Thyroid gland (tissue), 4 donors: ENCODE measurements at regions of chr1 and their contacts with region 1.

Region 1: GRCh38 chr1:233790662-233791375 is 113.7 kb upstream of the SLC35F3 start:
- DNase-seq: peak; percentile 14 to 37
- H3K4me3 ChIP-seq: no peak overlapping the region
- H3K27ac ChIP-seq: no peak overlapping the region
- H3K4me1 ChIP-seq: no peaks in the 10 kb centered on the region
- H3K27me3 ChIP-seq: no peaks in the 10 kb centered on the region
- CTCF ChIP-seq: peak; percentile 55 to 93 (median 82)
- POLR2A ChIP-seq: no peak

Region 2: DNA sequence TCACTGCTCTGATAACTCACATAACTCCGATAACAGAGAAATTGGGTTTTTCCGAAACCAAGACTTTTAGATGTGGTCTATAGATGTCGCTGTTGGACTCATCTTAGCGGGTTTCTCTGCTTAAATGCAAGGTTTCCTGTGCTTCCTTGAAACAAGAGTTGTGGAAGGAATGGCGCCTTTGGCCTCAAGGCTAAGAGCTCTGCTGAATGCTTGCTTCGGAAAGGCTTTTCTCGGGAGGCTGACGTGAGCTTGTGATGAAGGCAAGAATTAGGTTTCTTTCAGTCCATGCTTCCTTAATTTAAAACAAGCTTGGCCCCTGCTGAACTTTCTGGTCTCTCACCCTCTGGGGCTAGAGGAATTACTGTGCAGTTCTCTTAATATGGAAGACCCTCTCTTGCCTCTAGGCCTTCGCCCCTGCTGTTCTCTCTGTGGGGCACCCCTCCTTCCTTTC is 349.8 kb before region 1 on chr1:
- intact Hi-C with region 1: loop called (anchors 5 kb)
- DNase-seq: peak; percentile 8
- H3K4me3 ChIP-seq: no peak overlapping the region
- H3K27ac ChIP-seq: no peak overlapping the region
- H3K4me1 ChIP-seq: no peaks in the 10 kb centered on the region
- H3K27me3 ChIP-seq: no peaks in the 10 kb centered on the region
- CTCF ChIP-seq: peak; percentile 15 to 73 (median 56)
- POLR2A ChIP-seq: no peak

Region 3: GRCh38 chr1:233518349-233518748 is 272.5 kb before region 1 on chr1:
- intact Hi-C with region 1: loop called (anchors 5 kb)
- DNase-seq: peak in 1 of 2 donors; percentile 51
- H3K4me3 ChIP-seq: no peak overlapping the region
- H3K27ac ChIP-seq: no peak overlapping the region
- H3K4me1 ChIP-seq: peaks cover 0 to 9% of the 10 kb centered on the region in 2 donors
- H3K27me3 ChIP-seq: no peaks in the 10 kb centered on the region
- CTCF ChIP-seq: peak in 4 of 6 experiments; percentile 14 to 56 (median 41)
- POLR2A ChIP-seq: no peak